ENCODE measurements at regions of chr7 and their contacts with region 1.

Region 1: GRCh38 chr7:148962823-148963582 is 65.3 kb downstream of the PDIA4 start:
- DNase-seq: no peak
- H3K4me3 ChIP-seq: peak overlapping the region; percentile 54 to 71 (median 63)
- H3K27ac ChIP-seq: peak overlapping the region; percentile 68 to 74 (median 70)
- H3K4me1 ChIP-seq: peaks cover 11 to 33% (median 29%) of the 10 kb centered on the region in 4 donors
- H3K27me3 ChIP-seq: no peaks in the 10 kb centered on the region
- CTCF ChIP-seq: peak; percentile 68 to 72 (median 69)
- EP300 ChIP-seq: no peak
- POLR2A ChIP-seq: no peak

Region 2: GRCh38 chr7:148503875-148504487 is 459.0 kb before region 1 on chr7:
- intact Hi-C with region 1: loop called (anchors 2 kb)
- DNase-seq: peak; percentile 3
- H3K4me3 ChIP-seq: no peak overlapping the region
- H3K27ac ChIP-seq: no peak overlapping the region
- H3K4me1 ChIP-seq: no peaks in the 10 kb centered on the region
- H3K27me3 ChIP-seq: peaks cover 0 to 20% (median 10%) of the 10 kb centered on the region in 4 donors
- CTCF ChIP-seq: peak; percentile 62 to 75 (median 66)
- EP300 ChIP-seq: no peak
- POLR2A ChIP-seq: no peak

Region 3: GRCh38 chr7:148575640-148576411 is 387.2 kb before region 1 on chr7:
- intact Hi-C with region 1: loop called (anchors 2 kb)
- DNase-seq: no peak
- H3K4me3 ChIP-seq: no peak overlapping the region
- H3K27ac ChIP-seq: no peak overlapping the region
- H3K4me1 ChIP-seq: no peaks in the 10 kb centered on the region
- H3K27me3 ChIP-seq: no peaks in the 10 kb centered on the region
- CTCF ChIP-seq: peak; percentile 72 to 85 (median 75)
- EP300 ChIP-seq: no peak
- POLR2A ChIP-seq: no peak

Region 4: DNA sequence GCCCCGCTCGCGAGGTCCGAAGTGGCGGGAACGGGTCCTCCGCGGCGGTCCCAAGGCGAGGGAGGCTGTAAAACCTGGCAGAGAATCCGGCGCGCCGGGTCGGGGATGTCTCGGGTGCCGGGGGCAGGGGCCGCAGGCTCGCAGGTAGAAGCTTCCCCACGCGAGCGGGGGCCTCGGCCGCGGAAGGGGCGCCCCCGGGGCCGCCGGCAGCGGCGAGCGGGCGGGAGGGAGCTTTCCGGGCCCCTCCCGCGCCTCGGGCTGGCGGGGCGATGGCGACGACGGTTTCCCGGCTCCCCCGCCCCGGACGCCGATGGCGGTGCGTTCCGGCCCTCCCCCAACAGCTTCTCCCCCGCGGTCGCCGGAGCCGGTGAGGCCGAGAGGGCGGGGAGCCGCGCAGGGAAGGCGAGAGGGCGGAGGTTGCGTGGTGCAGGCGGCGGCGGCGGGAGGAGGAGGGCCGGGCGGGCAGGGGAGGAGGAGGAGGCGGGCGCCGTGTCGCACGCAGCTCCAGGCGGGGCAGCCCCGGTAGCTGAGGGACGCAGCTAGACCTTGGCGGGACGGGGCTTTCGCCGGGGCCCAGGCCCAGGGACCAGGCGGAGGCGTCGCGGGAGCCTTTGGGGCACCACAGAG is 264.5 kb before region 1 on chr7 and contains the start of gene CUL1:
- intact Hi-C with region 1: loop called (anchors 10 kb)
- DNase-seq: peak; percentile 96
- H3K4me3 ChIP-seq: peak within 1 kb of the TSS; percentile 81 to 99 (median 96)
- H3K27ac ChIP-seq: peak within 1 kb of the TSS; percentile 96 to 99 (median 99)
- H3K4me1 ChIP-seq: peaks cover 24 to 47% (median 43%) of the 10 kb centered on the region in 4 donors
- H3K27me3 ChIP-seq: no peaks in the 10 kb centered on the region
- CTCF ChIP-seq: no peak
- EP300 ChIP-seq: no peak
- POLR2A ChIP-seq: peak; percentile 66
- total RNA-seq, gene CUL1: 73.1 to 87.1 (median 77.8) TPM

Region 5: DNA sequence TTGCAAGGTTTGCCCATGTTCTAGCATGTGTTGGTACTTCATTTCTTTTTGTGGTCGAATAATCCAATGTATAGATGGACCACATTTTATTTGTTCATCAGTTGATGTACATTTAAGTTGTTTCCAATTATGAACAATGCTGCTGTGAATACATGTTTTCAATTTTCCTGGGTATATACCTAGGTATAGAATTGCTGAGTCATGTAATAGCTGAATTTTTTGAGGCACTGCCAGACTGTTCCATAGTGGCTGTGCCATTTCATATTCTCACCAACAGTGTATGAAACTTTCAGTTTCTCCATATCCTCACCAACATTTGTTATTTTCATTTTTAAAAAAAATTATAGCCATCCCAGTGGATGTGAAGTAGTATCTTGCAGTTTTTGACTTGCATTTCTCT is 169.4 kb before region 1 on chr7:
- intact Hi-C with region 1: loop called (anchors 10 kb)
- DNase-seq: no peak
- H3K4me3 ChIP-seq: no peak overlapping the region
- H3K27ac ChIP-seq: no peak overlapping the region
- H3K4me1 ChIP-seq: no peaks in the 10 kb centered on the region
- H3K27me3 ChIP-seq: no peaks in the 10 kb centered on the region
- CTCF ChIP-seq: no peak
- EP300 ChIP-seq: no peak
- POLR2A ChIP-seq: no peak

Region 6: GRCh38 chr7:148856891-148857290 is 106.1 kb before region 1 on chr7:
- intact Hi-C with region 1: loop called (anchors 2 kb)
- DNase-seq: no peak
- H3K4me3 ChIP-seq: no peak overlapping the region
- H3K27ac ChIP-seq: no peak overlapping the region
- H3K4me1 ChIP-seq: peaks cover 0 to 4% (median 0%) of the 10 kb centered on the region in 4 donors
- H3K27me3 ChIP-seq: no peaks in the 10 kb centered on the region
- CTCF ChIP-seq: no peak
- EP300 ChIP-seq: no peak
- POLR2A ChIP-seq: no peak

Region 7: DNA sequence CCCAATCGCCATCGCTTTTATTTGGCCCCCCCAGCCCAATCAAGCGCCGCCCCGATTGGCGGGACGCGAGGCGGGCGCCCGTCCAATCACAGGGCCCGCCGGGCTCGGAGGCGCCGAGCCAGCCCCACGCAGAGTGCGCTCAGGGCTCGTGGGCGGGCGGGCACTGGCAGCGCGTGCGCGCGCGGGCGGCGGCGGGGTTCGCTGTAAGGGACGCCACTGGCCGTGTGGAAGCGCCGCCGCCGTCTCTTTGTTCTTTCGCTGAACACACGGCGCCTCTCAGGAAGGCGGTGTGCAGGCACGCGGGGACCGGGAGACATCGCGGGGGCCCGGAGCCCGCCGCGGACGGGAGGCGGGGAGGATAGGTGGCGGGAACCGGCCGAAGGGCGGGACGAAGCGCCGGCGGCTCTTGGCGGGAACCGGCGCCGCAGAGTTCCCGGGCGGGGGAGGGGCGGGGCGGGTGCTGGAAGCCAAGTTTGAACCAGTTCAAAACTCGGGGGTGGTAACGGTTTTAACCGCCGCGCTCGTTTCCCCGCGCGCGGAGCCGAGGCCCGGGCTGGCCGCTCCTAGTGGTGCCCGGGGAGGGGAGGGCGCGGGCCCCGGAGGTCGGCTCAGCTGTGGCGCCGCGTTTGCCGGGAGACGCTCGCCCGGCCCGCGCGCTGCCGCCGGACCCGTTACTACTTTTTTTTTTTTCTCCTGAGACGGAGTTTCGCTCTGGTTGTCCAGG is 78.5 kb before region 1 on chr7:
- intact Hi-C with region 1: loop called (anchors 2 kb)
- DNase-seq: peak; percentile 97
- H3K4me3 ChIP-seq: peak overlapping the region; percentile 84 to 97 (median 94)
- H3K27ac ChIP-seq: peak overlapping the region; percentile 88 to 98 (median 94)
- H3K4me1 ChIP-seq: peaks cover 0 to 18% (median 17%) of the 10 kb centered on the region in 4 donors
- H3K27me3 ChIP-seq: peaks cover 0 to 18% (median 2%) of the 10 kb centered on the region in 4 donors
- CTCF ChIP-seq: no peak
- EP300 ChIP-seq: no peak
- POLR2A ChIP-seq: peak; percentile 44